GM13977 (cell line): ENCODE measurements at regions of chr7 and their contacts with region 1.

Region 1: DNA sequence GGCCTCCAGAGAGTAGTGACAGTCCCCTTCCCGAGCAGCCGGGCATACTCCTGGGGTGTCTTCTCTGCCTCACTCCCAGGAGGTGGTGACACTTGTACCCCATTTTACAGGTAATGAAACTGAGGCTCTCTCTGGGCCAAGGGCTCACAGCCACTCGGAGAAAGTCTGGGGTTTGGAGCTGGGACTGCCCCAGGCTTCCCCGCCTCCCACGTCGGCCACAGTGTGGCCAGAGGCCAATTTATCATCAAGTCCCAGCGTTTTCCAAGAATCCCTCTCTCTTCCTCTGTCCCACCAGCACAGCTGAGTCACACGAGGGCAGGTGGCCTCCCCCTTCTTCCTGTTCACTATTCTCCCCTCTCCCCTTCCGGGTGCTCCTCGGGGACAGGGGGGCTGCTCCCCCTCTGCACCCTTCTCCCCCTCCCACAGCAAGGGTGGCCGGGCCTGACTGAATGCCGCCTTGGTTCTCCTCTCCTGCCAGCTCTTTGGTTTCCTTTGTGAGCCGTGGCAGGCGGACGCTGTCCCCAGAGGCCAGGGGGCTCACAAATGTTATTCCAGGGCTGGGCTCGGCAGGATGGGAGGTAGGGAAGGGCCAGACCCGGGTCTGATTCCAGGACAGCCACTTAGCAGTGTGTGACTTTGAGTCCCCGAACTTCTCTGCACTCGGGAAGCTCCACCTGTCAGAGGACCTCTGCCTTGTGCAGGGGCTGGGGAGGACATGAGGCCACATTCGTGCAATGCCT is 17.7 kb downstream of the CLIP2 start:
- DNase-seq: no peak
- CTCF ChIP-seq: no peak

Region 2: GRCh38 chr7:74240482-74240881 is 66.4 kb before region 1 on chr7:
- in situ Hi-C with region 1: loop called (anchors 10 kb)
- DNase-seq: no peak
- CTCF ChIP-seq: no peak

Region 3: DNA sequence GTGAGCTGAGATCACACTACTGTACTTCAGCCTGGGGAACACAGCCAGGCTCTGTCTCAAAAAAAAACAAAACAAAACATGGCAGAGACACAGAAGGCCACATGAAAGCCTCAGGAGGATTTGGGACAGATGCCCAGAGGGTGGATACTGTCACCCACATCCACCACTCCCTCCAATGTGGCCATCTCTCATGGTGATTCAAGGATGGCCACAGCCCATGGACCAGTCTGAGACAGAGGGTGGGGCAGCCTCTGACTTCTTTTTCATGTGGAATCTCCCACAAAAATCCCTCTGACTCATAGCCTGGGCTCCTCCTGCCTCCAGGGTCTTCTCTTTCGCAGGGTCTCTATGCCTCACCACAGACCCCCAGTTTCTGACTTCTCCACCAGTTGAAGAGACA is 291.7 kb after region 1 on chr7:
- in situ Hi-C with region 1: no loop called
- DNase-seq: no peak
- CTCF ChIP-seq: no peak

Region 4: GRCh38 chr7:75010036-75010435 is 703.1 kb after region 1 on chr7:
- in situ Hi-C with region 1: no loop called
- DNase-seq: no peak
- CTCF ChIP-seq: no peak